CD14-positive monocyte (primary cell): ENCODE measurements at regions of chr2 and their contacts with region 1.

Region 1: DNA sequence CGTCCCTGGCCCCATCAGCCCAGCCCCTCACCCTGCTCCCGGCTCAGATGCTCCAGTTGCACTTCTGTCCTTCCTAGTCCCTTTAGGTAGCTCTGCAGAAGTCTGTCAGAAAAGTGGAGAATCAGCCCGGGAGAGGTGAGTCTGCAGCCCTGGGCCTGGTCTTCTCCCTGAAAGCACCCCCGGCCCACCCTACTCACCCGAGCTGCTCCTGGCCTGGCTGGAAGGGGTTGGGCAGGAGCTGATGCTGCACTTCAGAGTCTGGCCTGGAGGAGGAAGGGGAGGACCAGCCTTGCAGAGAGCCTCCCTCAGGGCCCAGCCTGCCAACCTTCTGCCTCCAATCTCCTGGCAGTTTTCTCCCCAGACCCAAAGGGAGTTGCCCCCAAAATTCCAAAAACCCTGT is 15.8 kb downstream of the KHK start:
- DNase-seq: no peak
- H3K4me3 ChIP-seq: no peak overlapping the region
- H3K4me3 Mint-ChIP-seq: no peak overlapping the region
- H3K27ac ChIP-seq: no peak overlapping the region
- H3K27ac Mint-ChIP-seq: no peak overlapping the region
- H3K4me1 ChIP-seq: peaks cover 4 to 5% of the 10 kb centered on the region in 2 donors
- H3K4me1 Mint-ChIP-seq: peaks cover 2% of the 10 kb centered on the region
- H3K27me3 ChIP-seq: no peaks in the 10 kb centered on the region
- H3K27me3 Mint-ChIP-seq: peaks cover 0 to 6% (median 2%) of the 10 kb centered on the region in 3 donors
- CTCF ChIP-seq: no peak

Region 2: GRCh38 chr2:26922405-26923188 is 179.7 kb before region 1 on chr2:
- intact Hi-C with region 1: no loop called
- DNase-seq: peak; percentile 5 to 35 (median 21)
- H3K4me3 ChIP-seq: no peak overlapping the region
- H3K4me3 Mint-ChIP-seq: peak overlapping the region in 1 of 2 donors; percentile 63
- H3K27ac ChIP-seq: no peak overlapping the region
- H3K27ac Mint-ChIP-seq: peak overlapping the region in 1 of 7 donors; percentile 21
- H3K4me1 ChIP-seq: peaks cover 0 to 5% of the 10 kb centered on the region in 2 donors
- H3K4me1 Mint-ChIP-seq: peaks cover 8% of the 10 kb centered on the region
- H3K27me3 ChIP-seq: no peaks in the 10 kb centered on the region
- H3K27me3 Mint-ChIP-seq: peaks cover 0 to 10% (median 6%) of the 10 kb centered on the region in 3 donors
- CTCF ChIP-seq: peak; percentile 45

Region 3: GRCh38 chr2:26993768-26994167 is 108.6 kb before region 1 on chr2:
- intact Hi-C with region 1: no loop called
- DNase-seq: no peak
- H3K4me3 ChIP-seq: no peak overlapping the region
- H3K4me3 Mint-ChIP-seq: no peak overlapping the region
- H3K27ac ChIP-seq: no peak overlapping the region
- H3K27ac Mint-ChIP-seq: no peak overlapping the region
- H3K4me1 ChIP-seq: no peaks in the 10 kb centered on the region
- H3K4me1 Mint-ChIP-seq: no peaks in the 10 kb centered on the region
- H3K27me3 ChIP-seq: no peaks in the 10 kb centered on the region
- H3K27me3 Mint-ChIP-seq: peaks cover 5 to 8% (median 6%) of the 10 kb centered on the region in 3 donors
- CTCF ChIP-seq: no peak

Region 4: DNA sequence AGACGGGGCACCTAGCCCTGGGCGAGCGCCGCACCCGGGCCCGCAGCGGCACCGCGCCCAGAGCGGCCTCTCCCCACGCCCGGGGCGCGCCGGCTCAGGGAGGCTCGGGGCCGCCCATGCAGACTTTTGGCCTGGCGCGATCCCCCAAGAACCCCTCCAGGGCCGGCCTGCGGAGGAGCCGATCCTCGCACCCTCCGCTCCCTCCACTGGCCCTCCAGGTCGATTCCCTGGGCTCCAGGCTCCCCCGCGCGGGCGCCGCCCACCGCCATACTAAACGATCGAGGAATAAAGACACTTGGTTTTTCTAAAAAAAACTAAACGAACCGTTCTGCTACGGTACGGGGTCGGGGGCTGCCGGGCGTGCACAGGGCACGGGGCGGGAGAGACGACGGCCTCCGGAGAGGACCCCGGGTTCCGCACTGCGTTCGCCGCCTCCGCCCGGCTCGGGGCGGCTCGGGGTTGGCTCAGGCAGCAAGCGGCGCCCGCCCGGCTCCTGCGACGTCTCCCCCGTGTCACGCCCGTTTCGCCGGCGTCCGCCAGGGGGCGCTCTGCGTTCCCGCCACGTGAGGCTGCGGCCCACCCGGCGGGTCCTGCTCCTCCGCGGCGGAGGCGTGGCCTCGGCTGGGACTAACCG is 16.1 kb before region 1 on chr2:
- intact Hi-C with region 1: no loop called
- DNase-seq: peak; percentile 92 to 94 (median 93)
- H3K4me3 ChIP-seq: peak overlapping the region; percentile 56 to 77 (median 71)
- H3K4me3 Mint-ChIP-seq: peak overlapping the region; percentile 85 to 86
- H3K27ac ChIP-seq: peak overlapping the region; percentile 70 to 84
- H3K27ac Mint-ChIP-seq: peak overlapping the region; percentile 31 to 88 (median 85)
- H3K4me1 ChIP-seq: peaks cover 34 to 41% of the 10 kb centered on the region in 2 donors
- H3K4me1 Mint-ChIP-seq: peaks cover 31% of the 10 kb centered on the region
- H3K27me3 ChIP-seq: no peaks in the 10 kb centered on the region
- H3K27me3 Mint-ChIP-seq: peaks cover 0 to 7% (median 5%) of the 10 kb centered on the region in 3 donors
- CTCF ChIP-seq: peak; percentile 92

Region 5: DNA sequence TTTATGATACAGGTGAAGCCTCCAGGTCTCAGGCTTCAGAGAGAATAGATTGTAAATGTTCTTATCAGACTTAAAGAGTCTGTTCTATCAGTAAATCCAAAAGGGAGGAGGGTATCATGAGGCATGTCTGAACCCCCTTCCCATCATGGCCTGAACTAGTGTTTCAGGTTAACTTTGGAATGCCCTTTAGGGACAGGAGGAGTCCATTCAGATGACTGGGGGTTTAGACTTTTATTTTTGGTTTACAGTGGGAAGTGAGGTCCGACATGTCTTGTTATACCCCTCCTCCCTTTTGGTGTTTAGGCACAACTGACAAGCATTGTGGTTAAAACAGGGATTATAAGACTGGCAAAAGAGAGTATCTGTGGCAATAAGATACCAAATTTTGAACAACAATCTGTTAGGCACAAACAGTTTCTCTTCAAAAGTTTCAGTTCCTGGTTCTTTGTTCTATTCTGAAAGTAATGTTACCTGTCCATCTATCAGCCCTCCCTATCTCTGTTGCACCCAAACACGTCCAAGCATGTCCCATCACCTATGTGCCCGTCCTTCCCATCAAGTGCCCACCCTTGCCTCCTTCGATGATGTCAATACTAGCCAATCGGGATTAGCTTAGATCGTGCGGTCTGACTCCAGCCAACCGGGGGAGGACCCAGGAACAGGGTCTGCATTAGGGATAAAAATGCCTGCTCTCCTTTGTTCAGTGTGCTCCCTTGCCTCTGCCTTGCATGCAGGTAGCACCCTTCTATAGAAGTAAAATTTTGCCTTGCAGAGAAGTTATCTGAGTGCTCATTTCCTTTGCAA is 62.8 kb after region 1 on chr2:
- intact Hi-C with region 1: loop called in 1 of 2 experiments (anchors 5 kb)
- DNase-seq: no peak
- H3K4me3 ChIP-seq: no peak overlapping the region
- H3K4me3 Mint-ChIP-seq: no peak overlapping the region
- H3K27ac ChIP-seq: no peak overlapping the region
- H3K27ac Mint-ChIP-seq: no peak overlapping the region
- H3K4me1 ChIP-seq: peaks cover 2 to 7% of the 10 kb centered on the region in 2 donors
- H3K4me1 Mint-ChIP-seq: peaks cover 5% of the 10 kb centered on the region
- H3K27me3 ChIP-seq: no peaks in the 10 kb centered on the region
- H3K27me3 Mint-ChIP-seq: peaks cover 2 to 11% (median 6%) of the 10 kb centered on the region in 3 donors
- CTCF ChIP-seq: no peak

Region 6: DNA sequence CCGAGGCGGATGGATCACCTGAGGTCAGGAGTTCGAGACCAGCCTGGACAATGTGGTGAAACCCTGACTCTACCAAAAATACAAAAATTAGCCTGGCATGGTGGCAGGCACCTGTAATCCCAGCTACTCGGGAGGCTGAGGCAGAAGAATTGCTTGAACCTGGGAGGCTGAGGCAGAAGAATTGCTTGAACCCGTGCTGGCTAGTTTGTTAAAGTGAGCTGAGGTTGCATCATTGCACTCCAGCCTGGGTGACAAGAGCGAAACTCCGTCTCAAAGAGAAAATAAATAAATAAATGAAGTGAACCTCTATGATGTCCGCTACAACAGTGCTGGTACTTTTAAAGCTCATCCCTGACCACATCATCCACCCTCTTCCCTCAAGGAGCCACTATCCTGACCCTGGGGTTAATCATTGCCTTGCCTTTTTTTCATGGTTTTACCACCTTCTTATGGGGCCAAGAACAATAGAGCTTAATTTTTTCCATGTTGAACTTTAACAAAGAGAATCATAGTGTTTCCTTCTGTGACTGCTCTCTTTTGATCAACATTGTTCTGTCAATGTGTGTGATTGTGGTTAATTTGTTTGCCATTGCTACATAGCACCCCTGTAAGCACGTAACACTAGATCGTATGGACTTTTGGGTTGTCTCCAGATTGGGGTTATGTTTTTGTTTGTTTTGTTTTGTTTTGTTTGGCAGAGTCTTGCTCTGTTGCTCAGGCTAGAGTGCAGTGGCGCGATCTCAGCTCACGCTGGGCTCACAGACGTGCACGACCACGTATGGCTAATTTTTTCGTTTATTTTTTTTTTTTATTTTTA is 92.4 kb after region 1 on chr2:
- intact Hi-C with region 1: no loop called
- DNase-seq: no peak
- H3K4me3 ChIP-seq: no peak overlapping the region
- H3K4me3 Mint-ChIP-seq: peak overlapping the region in 1 of 2 donors; percentile 39
- H3K27ac ChIP-seq: no peak overlapping the region
- H3K27ac Mint-ChIP-seq: no peak overlapping the region
- H3K4me1 ChIP-seq: no peaks in the 10 kb centered on the region
- H3K4me1 Mint-ChIP-seq: peaks cover 2% of the 10 kb centered on the region
- H3K27me3 ChIP-seq: no peaks in the 10 kb centered on the region
- H3K27me3 Mint-ChIP-seq: peaks cover 1 to 7% (median 6%) of the 10 kb centered on the region in 3 donors
- CTCF ChIP-seq: no peak

Region 7: DNA sequence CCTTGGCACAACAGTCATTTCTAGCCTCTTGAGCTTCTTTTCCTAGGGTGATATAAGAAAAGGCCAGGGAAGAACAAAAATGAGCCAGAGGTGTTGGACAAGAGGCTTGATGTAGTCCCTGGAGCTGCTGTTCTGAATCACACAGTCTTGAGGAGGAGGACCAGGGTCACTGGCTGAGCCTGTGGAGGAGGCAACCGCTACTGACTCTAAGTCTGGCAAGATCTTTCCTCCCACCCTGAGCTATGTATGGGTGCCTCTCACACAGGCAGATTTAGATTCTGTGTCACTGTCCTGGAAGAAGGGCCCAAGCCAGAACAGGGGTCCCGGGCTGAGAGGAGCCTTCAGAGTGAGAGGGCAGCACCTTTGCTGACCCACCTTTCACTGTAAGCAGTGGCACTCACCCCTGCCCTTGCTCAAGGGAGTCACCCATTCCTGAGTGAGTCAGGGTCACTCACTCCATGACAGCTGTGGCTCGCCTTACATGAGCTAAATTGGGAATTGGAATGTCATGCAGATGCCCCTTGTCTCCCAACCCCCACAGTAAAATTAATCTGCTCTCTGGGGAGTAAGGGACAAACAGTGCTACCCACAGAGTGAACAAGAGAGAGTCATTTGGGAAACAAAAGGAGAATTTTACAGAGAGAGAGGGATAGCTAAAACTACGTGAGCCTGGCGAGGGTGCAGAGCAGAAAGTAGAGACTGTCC is 179.7 kb after region 1 on chr2 and contains the start of gene TRIM54:
- intact Hi-C with region 1: loop called (anchors 2 to 5 kb)
- DNase-seq: no peak
- H3K4me3 ChIP-seq: no peak within 1 kb of the TSS
- H3K4me3 Mint-ChIP-seq: no peak within 1 kb of the TSS
- H3K27ac ChIP-seq: no peak within 1 kb of the TSS
- H3K27ac Mint-ChIP-seq: peak within 1 kb of the TSS in 1 of 7 donors; percentile 47
- H3K4me1 ChIP-seq: peaks cover 0 to 6% of the 10 kb centered on the region in 2 donors
- H3K4me1 Mint-ChIP-seq: peaks cover 7% of the 10 kb centered on the region
- H3K27me3 ChIP-seq: no peaks in the 10 kb centered on the region
- H3K27me3 Mint-ChIP-seq: peaks cover 2 to 14% (median 13%) of the 10 kb centered on the region in 3 donors
- CTCF ChIP-seq: no peak
- polyA plus RNA-seq, gene TRIM54: not detected